ENCODE measurements at regions of chr21 and their contacts with region 1.

Region 1: GRCh38 chr21:42117229-42117966 is 46.3 kb downstream of the UMODL1 start:
- DNase-seq: peak; percentile 71 to 79
- H3K4me3 ChIP-seq: no peak overlapping the region
- H3K27ac ChIP-seq: no peak overlapping the region
- H3K4me1 ChIP-seq: peaks cover 0 to 4% of the 10 kb centered on the region in 2 donors
- H3K27me3 ChIP-seq: no peaks in the 10 kb centered on the region
- CTCF ChIP-seq: peak; percentile 83 to 95 (median 88)
- POLR2A ChIP-seq: no peak

Region 2: DNA sequence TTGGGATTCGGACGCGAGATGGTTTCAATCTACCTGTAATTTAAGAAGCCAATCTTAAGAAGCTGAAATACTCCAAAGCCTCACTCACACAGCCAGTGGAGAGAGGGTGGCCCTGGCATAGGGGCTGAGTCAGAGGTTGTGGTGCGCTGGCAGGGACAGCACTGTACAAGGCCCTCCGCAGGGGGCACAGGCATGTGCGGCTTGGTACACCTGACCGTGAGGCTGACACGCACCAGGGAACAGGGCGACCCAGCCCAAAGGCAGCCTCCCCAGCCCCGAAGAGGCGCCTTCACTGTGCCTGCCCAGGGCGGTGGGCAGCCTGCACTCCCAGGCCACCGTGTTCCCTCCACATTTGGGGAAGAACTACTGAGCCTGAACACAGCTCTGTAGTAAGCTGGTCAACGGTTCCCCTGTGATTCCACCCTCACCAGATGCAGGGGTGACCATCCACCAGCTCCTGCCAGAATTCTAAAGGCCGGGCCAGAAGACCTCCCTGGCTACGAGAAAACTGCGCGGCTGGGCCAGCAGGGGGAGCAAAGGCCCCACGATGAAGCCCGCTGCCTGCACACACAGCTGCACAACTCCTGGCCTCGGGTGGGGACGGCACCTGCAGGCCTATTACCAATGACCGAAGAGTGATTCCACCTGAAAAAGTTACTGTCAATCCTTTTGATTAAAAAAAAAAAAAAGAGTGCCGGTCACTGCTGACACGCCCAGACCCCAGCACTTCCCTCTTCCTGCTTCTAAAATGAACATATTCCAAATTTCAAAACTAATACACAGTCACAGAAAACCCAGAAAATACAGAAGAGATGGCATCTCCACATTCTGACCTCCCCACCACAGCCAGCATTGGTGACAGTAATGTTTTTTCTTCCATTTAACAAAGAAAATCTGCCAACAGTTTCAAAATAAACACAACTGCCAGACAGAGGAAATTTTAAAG is 300.9 kb before region 1 on chr21:
- intact Hi-C with region 1: loop called (anchors 5 kb)
- DNase-seq: peak; percentile 68 to 70
- H3K4me3 ChIP-seq: no peak overlapping the region
- H3K27ac ChIP-seq: peak overlapping the region in 1 of 3 donors; percentile 26
- H3K4me1 ChIP-seq: peaks cover 0 to 15% of the 10 kb centered on the region in 2 donors
- H3K27me3 ChIP-seq: no peaks in the 10 kb centered on the region
- CTCF ChIP-seq: peak; percentile 46 to 76 (median 60)
- POLR2A ChIP-seq: no peak

Region 3: DNA sequence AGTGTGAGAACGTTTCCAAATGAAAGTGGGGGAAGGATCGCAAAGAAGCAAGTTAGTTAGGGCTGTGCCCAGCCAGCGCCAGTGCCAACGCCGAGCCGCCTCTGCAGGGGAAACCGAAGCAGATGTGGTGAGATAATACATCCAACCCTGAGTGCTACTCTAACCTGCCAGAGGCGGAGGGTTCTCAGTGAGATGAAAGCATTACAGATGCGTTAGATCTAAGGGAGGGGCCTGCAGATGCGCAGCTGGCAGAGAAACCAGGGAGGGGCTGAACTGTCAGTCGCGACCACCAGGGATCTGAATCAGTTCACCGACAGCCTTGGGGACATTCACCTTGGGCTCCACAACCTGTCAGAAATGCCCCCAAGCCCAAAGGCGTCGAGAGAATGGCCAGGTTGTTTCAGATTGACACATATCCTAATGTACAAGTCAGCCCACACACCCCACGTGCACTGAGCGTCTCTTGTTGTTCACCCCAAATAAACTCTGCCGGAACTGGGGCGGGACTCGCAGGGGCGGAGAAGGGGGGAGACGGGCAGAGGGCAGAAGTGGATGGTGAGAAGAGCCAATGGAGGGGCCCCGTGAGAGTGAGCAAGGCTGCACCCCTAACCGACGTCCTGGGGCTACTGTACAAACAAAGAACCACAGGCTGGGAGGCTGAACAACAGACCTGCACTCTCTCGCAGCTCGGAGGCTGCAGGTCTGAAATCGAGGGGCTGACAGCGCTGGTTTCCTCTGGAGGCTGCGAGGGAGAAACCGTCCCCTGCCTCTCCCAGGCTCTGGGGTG is 55.0 kb before region 1 on chr21:
- intact Hi-C with region 1: no loop called
- DNase-seq: peak in 1 of 2 donors; percentile 51
- H3K4me3 ChIP-seq: no peak overlapping the region
- H3K27ac ChIP-seq: no peak overlapping the region
- H3K4me1 ChIP-seq: peaks cover 22 to 34% of the 10 kb centered on the region in 2 donors
- H3K27me3 ChIP-seq: no peaks in the 10 kb centered on the region
- CTCF ChIP-seq: no peak
- POLR2A ChIP-seq: no peak